ENCODE measurements at regions of chr18 and their contacts with region 1.

Region 1: GRCh38 chr18:12408247-12408869 is 629 bp downstream of the PRELID3A start:
- DNase-seq: no peak
- H3K4me3 ChIP-seq: peak overlapping the region; percentile 46 to 63
- H3K27ac ChIP-seq: peak overlapping the region; percentile 77 to 78
- H3K4me1 ChIP-seq: no peaks in the 10 kb centered on the region
- H3K27me3 ChIP-seq: no peaks in the 10 kb centered on the region
- CTCF ChIP-seq: no peak
- POLR2A ChIP-seq: no peak

Region 2: GRCh38 chr18:12883684-12884405 is 475.5 kb after region 1 on chr18 and contains the start of gene PTPN2:
- intact Hi-C with region 1: loop called (anchors 5 kb)
- DNase-seq: peak; percentile 92
- H3K4me3 ChIP-seq: peak within 1 kb of the TSS; percentile 63 to 88
- H3K27ac ChIP-seq: peak within 1 kb of the TSS; percentile 98 to 99
- H3K4me1 ChIP-seq: no peaks in the 10 kb centered on the region
- H3K27me3 ChIP-seq: no peaks in the 10 kb centered on the region
- CTCF ChIP-seq: no peak
- POLR2A ChIP-seq: peak; percentile 82
- total RNA-seq, gene PTPN2: 25.0 to 34.0 TPM

Measured in prostate gland (tissue), 2 donors.